ENCODE measurements at regions of chr1 and their contacts with region 1.

Region 1: DNA sequence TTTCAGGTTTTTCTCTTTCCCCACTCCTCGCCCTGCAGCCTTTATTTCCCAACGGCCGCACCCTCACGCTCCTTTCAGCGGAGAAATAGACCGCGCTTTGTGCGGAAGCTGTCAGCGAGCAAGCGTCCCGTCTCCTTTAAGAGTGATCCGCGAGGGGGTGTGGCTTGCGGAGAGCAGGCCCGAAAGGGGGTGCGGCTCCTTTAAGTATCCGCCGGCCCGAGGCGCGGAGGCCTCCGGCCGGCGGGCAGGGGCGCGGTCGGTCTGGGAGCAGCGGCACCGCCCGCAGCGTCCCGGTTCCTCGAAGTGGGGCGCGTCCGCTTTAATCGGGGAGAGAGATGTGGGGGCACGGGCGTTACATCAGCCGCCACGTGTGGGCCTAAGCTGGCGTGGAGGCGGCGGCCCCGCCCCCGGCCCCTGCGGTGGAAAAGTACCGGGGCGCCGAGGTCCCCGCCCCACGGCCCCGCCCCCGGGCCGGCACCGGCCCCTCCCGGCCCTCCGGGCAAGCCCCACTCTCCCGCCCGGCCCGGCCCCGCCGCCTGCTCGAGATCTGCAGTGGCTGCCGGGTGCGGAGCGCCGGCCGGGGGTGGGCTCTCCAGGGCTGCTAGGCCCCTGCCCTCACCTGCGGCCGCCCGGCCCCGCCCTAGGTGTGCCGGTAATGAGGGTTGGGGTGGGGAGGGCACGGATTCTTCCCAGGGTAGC is 1.2 kb downstream of the SLC6A9 start:
- DNase-seq: peak; percentile 73 to 90 (median 85)
- ATAC-seq: peak; percentile 90
- H3K4me3 ChIP-seq: peak overlapping the region; percentile 61
- H3K4me3 Mint-ChIP-seq: peak overlapping the region; percentile 94 to 99 (median 97)
- H3K27ac ChIP-seq: peak overlapping the region; percentile 78
- H3K27ac Mint-ChIP-seq: peak overlapping the region; percentile 92 to 98 (median 94)
- H3K4me1 ChIP-seq: peaks cover 0 to 7% of the 10 kb centered on the region in 2 donors
- H3K4me1 Mint-ChIP-seq: peaks cover 16 to 40% (median 23%) of the 10 kb centered on the region in 7 donors
- H3K27me3 ChIP-seq: no peaks in the 10 kb centered on the region
- H3K27me3 Mint-ChIP-seq: no peaks in the 10 kb centered on the region

Region 2: GRCh38 chr1:43706598-43707495 is 323.2 kb before region 1 on chr1:
- CTCF ChIA-PET with region 1: no interaction called
- POLR2A ChIA-PET with region 1: no interaction called
- intact Hi-C with region 1: loop called in 1 of 2 experiments (anchors 1 kb)
- DNase-seq: peak; percentile 84 to 94 (median 89)
- ATAC-seq: peak; percentile 98
- H3K4me3 ChIP-seq: peak overlapping the region; percentile 92
- H3K4me3 Mint-ChIP-seq: peak overlapping the region; percentile 82 to 90 (median 88)
- H3K27ac ChIP-seq: peak overlapping the region; percentile 79
- H3K27ac Mint-ChIP-seq: peak overlapping the region in 7 of 9 donors; percentile 32 to 87 (median 79)
- H3K4me1 ChIP-seq: peaks cover 7 to 10% of the 10 kb centered on the region in 2 donors
- H3K4me1 Mint-ChIP-seq: peaks cover 7 to 46% (median 27%) of the 10 kb centered on the region in 7 donors
- H3K27me3 ChIP-seq: no peaks in the 10 kb centered on the region
- H3K27me3 Mint-ChIP-seq: no peaks in the 10 kb centered on the region

Region 3: GRCh38 chr1:43991476-43992231 is 38.4 kb before region 1 on chr1 and contains the start of gene CCDC24:
- CTCF ChIA-PET with region 1: no interaction called
- POLR2A ChIA-PET with region 1: no interaction called
- intact Hi-C with region 1: loop called (anchors 1 kb)
- DNase-seq: peak; percentile 38 to 81 (median 58)
- ATAC-seq: peak; percentile 91
- H3K4me3 ChIP-seq: peak within 1 kb of the TSS; percentile 79
- H3K4me3 Mint-ChIP-seq: peak within 1 kb of the TSS; percentile 83 to 95 (median 92)
- H3K27ac ChIP-seq: peak within 1 kb of the TSS; percentile 72
- H3K27ac Mint-ChIP-seq: peak within 1 kb of the TSS in 8 of 9 donors; percentile 43 to 91 (median 73)
- H3K4me1 ChIP-seq: peaks cover 0 to 11% of the 10 kb centered on the region in 2 donors
- H3K4me1 Mint-ChIP-seq: peaks cover 0 to 17% (median 9%) of the 10 kb centered on the region in 7 donors
- H3K27me3 ChIP-seq: no peaks in the 10 kb centered on the region
- H3K27me3 Mint-ChIP-seq: no peaks in the 10 kb centered on the region
- total RNA-seq, gene CCDC24: 0.40 to 2.9 (median 1.6) TPM

Region 4: DNA sequence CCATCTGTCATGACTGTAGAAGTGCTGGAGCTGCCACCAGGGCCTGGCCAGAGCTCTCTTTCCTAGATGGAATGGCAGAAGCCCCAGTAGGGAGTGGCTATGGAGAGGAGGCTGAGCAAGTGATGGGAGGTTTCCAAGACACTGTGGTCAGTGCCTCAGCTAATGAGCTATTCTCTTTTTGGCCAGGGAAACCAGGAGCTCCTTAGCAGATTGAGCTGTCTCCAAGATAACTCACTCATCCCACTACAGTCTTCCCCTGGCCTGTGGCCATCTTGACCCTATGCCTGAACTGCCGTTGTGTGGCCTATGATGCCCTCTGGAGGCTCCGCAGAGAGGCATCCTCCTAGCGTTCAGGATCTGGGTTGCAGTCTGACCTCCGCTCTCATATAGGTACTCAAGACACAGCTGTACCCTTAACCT is 264.5 kb after region 1 on chr1:
- CTCF ChIA-PET with region 1: no interaction called
- POLR2A ChIA-PET with region 1: no interaction called
- intact Hi-C with region 1: no loop called
- DNase-seq: no peak
- ATAC-seq: no peak
- H3K4me3 ChIP-seq: no peak overlapping the region
- H3K4me3 Mint-ChIP-seq: no peak overlapping the region
- H3K27ac ChIP-seq: no peak overlapping the region
- H3K27ac Mint-ChIP-seq: no peak overlapping the region
- H3K4me1 ChIP-seq: no peaks in the 10 kb centered on the region
- H3K4me1 Mint-ChIP-seq: peaks cover 0 to 4% (median 0%) of the 10 kb centered on the region in 7 donors
- H3K27me3 ChIP-seq: no peaks in the 10 kb centered on the region
- H3K27me3 Mint-ChIP-seq: no peaks in the 10 kb centered on the region

Measured in naive thymus-derived CD4-positive, alpha-beta T cell (primary cell).